ENCODE measurements at regions of chr7 and their contacts with region 1.

Region 1: DNA sequence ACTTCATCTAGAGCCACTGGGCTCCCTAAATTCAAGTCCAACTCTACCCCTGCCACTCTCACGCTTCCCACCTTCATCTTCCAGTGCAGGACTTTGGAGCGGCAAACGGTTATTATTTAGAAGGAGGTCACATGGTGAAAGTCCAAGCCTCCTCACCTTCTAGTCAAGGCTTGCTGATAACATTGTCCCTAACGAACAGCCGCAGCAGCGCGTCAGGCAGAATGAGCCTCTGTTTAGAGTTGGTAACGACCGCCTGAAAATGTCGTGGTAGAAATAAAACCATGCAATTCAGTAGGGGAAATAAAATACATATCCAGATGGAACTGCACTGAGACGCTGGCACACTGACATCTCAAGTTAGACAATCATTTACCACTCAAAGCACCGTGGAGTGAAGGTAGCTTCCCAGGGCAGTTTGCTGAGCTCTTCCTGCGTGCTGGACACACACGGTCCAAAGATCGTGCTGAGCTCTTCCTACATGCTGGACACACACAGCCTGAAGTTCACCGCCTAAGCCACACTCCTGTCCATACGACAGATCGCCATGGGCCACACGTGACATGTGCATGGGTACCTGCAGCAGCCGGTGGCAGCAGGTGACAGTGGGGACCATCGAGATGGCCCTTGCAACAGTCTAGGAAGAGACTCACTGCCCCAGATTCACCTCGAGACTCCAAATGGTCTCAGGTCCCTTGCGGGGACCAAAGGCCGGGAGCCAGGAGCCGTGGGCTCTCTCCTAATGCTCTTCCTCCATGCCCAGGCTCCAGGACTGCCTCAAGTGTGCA is 323.5 kb downstream of the PTPRN2 start:
- DNase-seq: peak; percentile 89
- ATAC-seq: peak; percentile 96
- H3K4me3 ChIP-seq: peak overlapping the region; percentile 44 to 70 (median 68); a peak in 5 of 6 replicates
- H3K27ac ChIP-seq: peak overlapping the region; percentile 91
- H3K4me1 ChIP-seq: peaks cover 39% of the 10 kb centered on the region
- H3K27me3 ChIP-seq: no peaks in the 10 kb centered on the region
- CTCF ChIP-seq: no peak
- EP300 ChIP-seq: peak in 1 of 2 experiments; percentile 37; a peak in 1 of 4 replicates
- POLR2A ChIP-seq: peak in 1 of 2 experiments; percentile 55; a peak in 2 of 4 replicates
- RAD21 ChIP-seq: peak; percentile 18; the same call in 1 of the 2 replicates

Region 2: GRCh38 chr7:158291998-158292397 is 27.8 kb after region 1 on chr7:
- CTCF ChIA-PET with region 1: no interaction called
- POLR2A ChIA-PET with region 1: no interaction called
- in situ Hi-C with region 1: no loop called
- intact Hi-C with region 1: loop called (anchors 1 kb)
- DNase-seq: no peak
- ATAC-seq: no peak
- H3K4me3 ChIP-seq: no peak overlapping the region
- H3K27ac ChIP-seq: no peak overlapping the region
- H3K4me1 ChIP-seq: no peaks in the 10 kb centered on the region
- H3K27me3 ChIP-seq: no peaks in the 10 kb centered on the region
- CTCF ChIP-seq: no peak
- EP300 ChIP-seq: no peak
- POLR2A ChIP-seq: no peak
- RAD21 ChIP-seq: no peak

Region 3: GRCh38 chr7:158572003-158572828 is 308.1 kb after region 1 on chr7:
- CTCF ChIA-PET with region 1: no interaction called
- POLR2A ChIA-PET with region 1: no interaction called
- in situ Hi-C with region 1: no loop called
- intact Hi-C with region 1: no loop called
- DNase-seq: peak; percentile 27
- ATAC-seq: peak; percentile 76
- H3K4me3 ChIP-seq: no peak overlapping the region
- H3K27ac ChIP-seq: no peak overlapping the region
- H3K4me1 ChIP-seq: peaks cover 31% of the 10 kb centered on the region
- H3K27me3 ChIP-seq: no peaks in the 10 kb centered on the region
- CTCF ChIP-seq: peak; percentile 35
- EP300 ChIP-seq: no peak
- POLR2A ChIP-seq: no peak
- RAD21 ChIP-seq: no peak

Region 4: GRCh38 chr7:158789842-158790241 is 525.7 kb after region 1 on chr7:
- CTCF ChIA-PET with region 1: no interaction called
- POLR2A ChIA-PET with region 1: no interaction called
- in situ Hi-C with region 1: no loop called
- intact Hi-C with region 1: no loop called
- DNase-seq: no peak
- ATAC-seq: no peak
- H3K4me3 ChIP-seq: no peak overlapping the region
- H3K27ac ChIP-seq: no peak overlapping the region
- H3K4me1 ChIP-seq: no peaks in the 10 kb centered on the region
- H3K27me3 ChIP-seq: no peaks in the 10 kb centered on the region
- CTCF ChIP-seq: no peak
- EP300 ChIP-seq: no peak
- POLR2A ChIP-seq: no peak
- RAD21 ChIP-seq: no peak

Measured in HepG2 (cell line).